A673 (cell line): ENCODE measurements at regions of chr12 and their contacts with region 1.

Region 1: DNA sequence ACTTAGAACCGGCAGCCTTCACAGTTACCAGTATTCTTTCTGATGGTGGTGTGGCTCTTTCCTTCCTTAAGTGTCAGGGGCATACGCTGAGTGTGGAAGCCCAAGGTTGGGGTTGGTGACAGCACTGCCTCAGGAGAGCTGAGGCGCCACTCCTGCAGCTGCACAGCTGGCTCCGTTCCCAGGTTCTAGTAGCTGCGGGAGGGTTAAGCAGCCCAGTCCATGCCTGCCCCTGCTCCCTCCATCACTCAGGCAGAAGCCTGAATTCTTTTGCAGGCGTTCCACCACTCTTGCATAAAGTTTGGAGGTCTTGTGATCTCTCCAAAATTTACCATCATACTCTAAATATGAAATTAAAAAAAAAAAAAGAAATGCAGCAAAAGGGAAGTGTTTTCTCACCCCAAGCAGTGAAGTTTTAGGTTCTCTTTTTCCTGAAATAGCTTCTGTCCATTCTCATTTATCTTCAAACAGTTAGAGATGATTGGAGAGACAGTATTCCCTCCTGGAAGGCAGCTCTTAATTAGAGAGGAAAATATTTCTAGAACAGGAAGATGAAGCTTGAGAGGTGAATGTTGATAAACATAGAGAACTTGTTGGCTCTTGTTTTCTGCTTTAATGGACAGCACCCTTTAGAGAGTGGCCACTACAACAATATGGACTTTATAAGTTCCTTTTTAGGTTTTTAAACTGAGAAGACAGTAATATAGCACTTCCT is 136.1 kb downstream of the FGD4 start:
- DNase-seq: peak; percentile 87
- H3K4me3 ChIP-seq: peak overlapping the region; percentile 35
- H3K27ac ChIP-seq: peak overlapping the region; percentile 3
- H3K4me1 ChIP-seq: peaks cover 35% of the 10 kb centered on the region
- H3K27me3 ChIP-seq: no peaks in the 10 kb centered on the region
- CTCF ChIP-seq: no peak

Region 2: DNA sequence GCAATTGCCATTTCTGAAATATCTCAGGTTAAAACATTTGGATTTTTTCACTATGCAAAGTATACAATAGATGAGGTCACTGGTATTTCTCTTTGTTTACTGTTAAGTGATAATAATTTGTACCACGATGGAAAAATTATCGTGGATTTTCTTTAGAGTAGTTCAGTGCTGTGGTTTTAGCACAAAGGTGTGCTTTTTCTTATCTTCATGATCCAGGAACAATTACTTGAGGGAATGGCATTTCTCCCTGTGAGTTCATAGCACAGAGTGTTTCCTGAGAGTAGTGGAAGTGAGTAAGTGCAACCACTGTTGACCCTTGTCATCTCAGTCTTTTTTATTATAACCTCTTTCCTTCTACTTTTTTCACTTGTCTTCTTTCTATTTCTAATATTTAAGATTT is 49.3 kb before region 1 on chr12:
- CTCF ChIA-PET with region 1: no interaction called
- POLR2A ChIA-PET with region 1: no interaction called
- intact Hi-C with region 1: loop called (anchors 5 kb)
- DNase-seq: no peak
- H3K4me3 ChIP-seq: no peak overlapping the region
- H3K27ac ChIP-seq: no peak overlapping the region
- H3K4me1 ChIP-seq: peaks cover 4% of the 10 kb centered on the region
- H3K27me3 ChIP-seq: no peaks in the 10 kb centered on the region
- CTCF ChIP-seq: no peak

Region 3: GRCh38 chr12:32522331-32523221 is 12.9 kb before region 1 on chr12:
- CTCF ChIA-PET with region 1: no interaction called
- POLR2A ChIA-PET with region 1: no interaction called
- intact Hi-C with region 1: no loop called
- DNase-seq: no peak
- H3K4me3 ChIP-seq: peak overlapping the region; percentile 18
- H3K27ac ChIP-seq: peak overlapping the region; percentile 74
- H3K4me1 ChIP-seq: peaks cover 22% of the 10 kb centered on the region
- H3K27me3 ChIP-seq: no peaks in the 10 kb centered on the region
- CTCF ChIP-seq: no peak

Region 4: GRCh38 chr12:32970465-32971110 is 435.1 kb after region 1 on chr12:
- CTCF ChIA-PET with region 1: no interaction called
- POLR2A ChIA-PET with region 1: no interaction called
- intact Hi-C with region 1: no loop called
- DNase-seq: no peak
- H3K4me3 ChIP-seq: no peak overlapping the region
- H3K27ac ChIP-seq: no peak overlapping the region
- H3K4me1 ChIP-seq: no peaks in the 10 kb centered on the region
- H3K27me3 ChIP-seq: no peaks in the 10 kb centered on the region
- CTCF ChIP-seq: no peak